CD4-positive, alpha-beta T cell (primary cell): ENCODE measurements at regions of chr12 and their contacts with region 1.

Region 1: DNA sequence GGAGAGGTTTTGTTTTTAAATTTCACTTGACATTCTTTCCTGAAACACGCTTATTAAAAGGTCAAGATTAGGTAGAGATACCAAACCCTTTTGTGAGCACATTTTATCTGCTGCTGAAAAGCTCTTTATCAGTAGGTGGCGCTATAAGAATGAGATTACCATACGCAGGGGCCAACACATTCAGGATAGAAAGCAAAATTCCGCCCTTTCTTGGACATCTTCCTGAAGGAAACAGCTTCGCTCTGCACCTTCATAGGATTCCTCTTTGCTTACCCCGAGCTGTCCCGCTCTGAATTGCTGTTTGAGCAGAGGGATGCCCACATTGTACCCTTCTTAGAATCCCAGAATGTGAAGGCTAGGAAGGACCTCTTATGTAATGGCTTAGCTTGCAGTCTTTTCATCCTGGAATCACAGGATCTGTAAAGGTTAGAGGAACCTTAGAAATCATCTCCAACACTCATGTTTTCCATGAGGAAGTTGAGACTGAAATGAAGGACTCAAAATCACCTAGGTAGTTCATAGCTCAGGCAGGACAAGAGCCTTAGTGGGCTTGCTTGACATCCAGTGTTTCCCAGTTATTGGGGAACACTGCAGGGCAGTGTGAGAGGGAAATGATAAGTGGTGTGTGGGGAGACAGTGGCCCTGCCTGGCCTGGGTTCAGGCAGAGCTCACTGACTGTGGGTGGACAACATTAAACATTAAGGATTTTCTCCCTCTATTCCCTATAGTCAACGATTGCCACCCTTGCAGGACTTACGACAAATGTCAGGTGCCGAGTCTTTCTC is 38.7 kb upstream of the CRY1 start:
- DNase-seq: peak in 6 of 14 experiments; percentile 5 to 70 (median 44)
- ATAC-seq: peak; percentile 57
- H3K4me3 ChIP-seq: no peak overlapping the region
- H3K4me3 Mint-ChIP-seq: no peak overlapping the region
- H3K27ac ChIP-seq: no peak overlapping the region
- H3K27ac Mint-ChIP-seq: no peak overlapping the region
- H3K4me1 ChIP-seq: peaks cover 7% of the 10 kb centered on the region
- H3K4me1 Mint-ChIP-seq: no peaks in the 10 kb centered on the region
- H3K27me3 ChIP-seq: no peaks in the 10 kb centered on the region
- H3K27me3 Mint-ChIP-seq: no peaks in the 10 kb centered on the region
- CTCF ChIP-seq: peak; percentile 89

Region 2: DNA sequence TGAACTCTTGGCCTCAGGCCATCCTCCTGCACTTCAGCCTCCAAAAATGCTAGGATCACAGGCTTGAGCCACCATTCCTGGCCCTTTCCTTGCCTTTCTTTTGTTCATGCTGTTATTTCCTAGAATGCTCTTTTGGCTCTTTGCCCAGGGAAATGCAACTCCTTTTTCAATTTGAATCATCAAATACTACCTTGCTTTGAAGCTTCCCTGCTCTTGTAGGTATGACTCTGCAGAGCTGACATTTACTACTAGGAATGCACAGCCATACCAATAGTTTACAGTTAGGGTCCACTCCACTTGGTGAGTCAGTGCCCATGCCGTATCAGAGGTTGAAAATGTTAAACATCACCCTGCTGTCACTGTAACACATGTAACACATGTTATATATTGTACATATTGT is 68.4 kb after region 1 on chr12:
- CTCF ChIA-PET with region 1: no interaction called
- POLR2A ChIA-PET with region 1: no interaction called
- intact Hi-C with region 1: no loop called
- DNase-seq: no peak
- ATAC-seq: no peak
- H3K4me3 ChIP-seq: no peak overlapping the region
- H3K4me3 Mint-ChIP-seq: no peak overlapping the region
- H3K27ac ChIP-seq: no peak overlapping the region
- H3K27ac Mint-ChIP-seq: no peak overlapping the region
- H3K4me1 ChIP-seq: no peaks in the 10 kb centered on the region
- H3K4me1 Mint-ChIP-seq: no peaks in the 10 kb centered on the region
- H3K27me3 ChIP-seq: no peaks in the 10 kb centered on the region
- H3K27me3 Mint-ChIP-seq: no peaks in the 10 kb centered on the region
- CTCF ChIP-seq: no peak

Region 3: GRCh38 chr12:107564946-107565345 is 432.9 kb after region 1 on chr12:
- CTCF ChIA-PET with region 1: no interaction called
- POLR2A ChIA-PET with region 1: no interaction called
- intact Hi-C with region 1: loop called in 1 of 2 experiments (anchors 1 kb)
- DNase-seq: peak in 4 of 14 experiments; percentile 2 to 19 (median 10)
- ATAC-seq: peak; percentile 63
- H3K4me3 ChIP-seq: no peak overlapping the region
- H3K4me3 Mint-ChIP-seq: no peak overlapping the region
- H3K27ac ChIP-seq: no peak overlapping the region
- H3K27ac Mint-ChIP-seq: peak overlapping the region; percentile 38
- H3K4me1 ChIP-seq: no peaks in the 10 kb centered on the region
- H3K4me1 Mint-ChIP-seq: peaks cover 21% of the 10 kb centered on the region
- H3K27me3 ChIP-seq: no peaks in the 10 kb centered on the region
- H3K27me3 Mint-ChIP-seq: no peaks in the 10 kb centered on the region
- CTCF ChIP-seq: no peak

Region 4: DNA sequence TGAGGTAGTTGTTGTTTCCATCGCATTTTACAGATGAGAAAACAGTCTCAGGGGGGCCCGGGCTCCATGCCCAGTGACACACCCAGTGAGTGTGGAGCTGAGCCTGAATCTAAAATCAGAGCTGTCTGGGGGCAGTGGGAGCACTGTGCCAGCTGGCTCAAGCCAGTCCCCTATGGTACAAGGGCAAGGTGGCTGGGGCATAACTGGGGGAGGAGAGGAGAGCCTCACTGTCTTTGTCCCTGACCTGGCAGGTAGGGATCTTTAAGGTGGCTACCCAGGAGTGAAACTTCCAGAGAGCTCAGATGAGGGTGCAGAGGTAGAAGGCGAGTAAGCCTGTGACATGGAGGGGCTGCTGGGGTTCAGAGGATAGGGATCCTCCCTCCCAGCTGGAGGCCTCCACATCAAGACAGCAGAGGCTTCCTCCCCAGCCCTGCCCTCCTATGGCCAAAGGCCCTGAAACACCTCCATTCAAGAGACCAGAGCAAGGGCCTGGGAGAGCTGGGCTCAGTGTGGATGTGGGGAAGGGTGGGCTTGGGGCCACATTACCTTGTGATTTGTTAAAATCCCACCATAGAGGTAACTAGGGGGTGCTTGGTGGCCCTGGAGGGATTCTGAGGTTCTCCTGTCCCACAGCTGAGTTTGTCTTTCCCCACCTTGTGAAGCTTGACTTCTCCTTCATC is 675.6 kb after region 1 on chr12:
- CTCF ChIA-PET with region 1: no interaction called
- POLR2A ChIA-PET with region 1: no interaction called
- intact Hi-C with region 1: no loop called
- DNase-seq: no peak
- ATAC-seq: no peak
- H3K4me3 ChIP-seq: no peak overlapping the region
- H3K4me3 Mint-ChIP-seq: no peak overlapping the region
- H3K27ac ChIP-seq: no peak overlapping the region
- H3K27ac Mint-ChIP-seq: no peak overlapping the region
- H3K4me1 ChIP-seq: no peaks in the 10 kb centered on the region
- H3K4me1 Mint-ChIP-seq: no peaks in the 10 kb centered on the region
- H3K27me3 ChIP-seq: peaks cover 0 to 2% of the 10 kb centered on the region in 2 experiments
- H3K27me3 Mint-ChIP-seq: peaks cover 24% of the 10 kb centered on the region
- CTCF ChIP-seq: no peak